CD4-positive, alpha-beta T cell (primary cell): ENCODE measurements at regions of chr16 and their contacts with region 1.

Region 1: DNA sequence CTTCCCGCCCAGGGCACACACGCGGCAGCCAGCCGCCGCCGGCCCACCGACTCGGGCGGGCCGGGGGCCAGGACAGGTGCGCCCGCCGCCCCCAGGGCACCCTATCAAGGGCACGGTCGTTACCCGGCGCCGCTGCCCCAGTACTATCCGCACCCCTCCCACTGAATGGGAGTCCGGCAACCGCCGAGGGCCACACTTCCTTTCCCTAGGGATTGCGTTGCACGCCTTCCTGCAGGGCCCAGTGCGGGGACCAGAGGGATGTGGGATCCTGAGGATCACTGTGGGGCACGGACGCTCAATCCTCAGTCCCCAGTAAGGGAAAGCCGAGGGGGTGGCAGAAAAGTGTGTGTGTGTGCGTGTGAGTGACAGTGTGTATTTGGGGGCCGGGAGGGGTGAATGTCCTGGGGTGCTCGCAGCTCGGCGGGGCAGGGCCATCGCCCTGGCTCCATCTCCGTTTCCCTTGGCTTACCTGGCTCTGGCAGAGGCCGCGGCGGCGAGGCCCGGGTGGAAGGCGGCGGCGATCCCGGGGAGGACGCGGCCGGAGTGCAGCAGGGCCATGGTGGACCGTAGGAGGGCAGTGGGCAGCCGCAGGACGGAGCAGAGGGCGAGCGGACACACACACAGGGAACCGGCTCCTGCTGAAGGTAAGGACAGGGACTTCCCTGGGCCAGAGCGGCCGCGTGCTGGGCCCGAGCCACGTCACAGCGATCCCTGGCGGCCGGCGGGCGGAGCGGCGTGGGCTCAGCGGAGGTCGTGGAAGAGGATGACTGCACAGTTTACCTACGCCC is at the start of gene GOT2:
- DNase-seq: peak; percentile 62 to 89 (median 74)
- ATAC-seq: peak; percentile 97
- H3K4me3 ChIP-seq: peak within 1 kb of the TSS; percentile 92
- H3K4me3 Mint-ChIP-seq: peak within 1 kb of the TSS; percentile 99
- H3K27ac ChIP-seq: peak within 1 kb of the TSS in 1 of 2 donors; percentile 43
- H3K27ac Mint-ChIP-seq: peak within 1 kb of the TSS; percentile 71
- H3K4me1 ChIP-seq: peaks cover 15% of the 10 kb centered on the region
- H3K4me1 Mint-ChIP-seq: peaks cover 56% of the 10 kb centered on the region
- H3K27me3 ChIP-seq: no peaks in the 10 kb centered on the region
- H3K27me3 Mint-ChIP-seq: no peaks in the 10 kb centered on the region
- CTCF ChIP-seq: peak; percentile 88
- total RNA-seq, gene GOT2: 17.4 to 18.7 TPM

Region 2: GRCh38 chr16:58684354-58685083 is 49.3 kb before region 1 on chr16 and contains the start of gene SLC38A7:
- CTCF ChIA-PET with region 1: no interaction called
- POLR2A ChIA-PET with region 1: interaction called, 4 read pairs
- intact Hi-C with region 1: loop called in 1 of 2 experiments (anchors 5 kb)
- DNase-seq: peak; percentile 50 to 84 (median 64)
- ATAC-seq: peak; percentile 90
- H3K4me3 ChIP-seq: peak within 1 kb of the TSS; percentile 77
- H3K4me3 Mint-ChIP-seq: peak within 1 kb of the TSS; percentile 91
- H3K27ac ChIP-seq: peak within 1 kb of the TSS; percentile 13 to 18
- H3K27ac Mint-ChIP-seq: peak within 1 kb of the TSS; percentile 31
- H3K4me1 ChIP-seq: peaks cover 19% of the 10 kb centered on the region
- H3K4me1 Mint-ChIP-seq: peaks cover 20% of the 10 kb centered on the region
- H3K27me3 ChIP-seq: no peaks in the 10 kb centered on the region
- H3K27me3 Mint-ChIP-seq: no peaks in the 10 kb centered on the region
- CTCF ChIP-seq: no peak
- total RNA-seq, gene SLC38A7: 5.3 to 5.6 TPM